Posterior cingulate gyrus (tissue), 11 donors: ENCODE measurements at regions of chr1 and their contacts with region 1.

Region 1: GRCh38 chr1:43073490-43074230 is 98.4 kb downstream of the EBNA1BP2 start:
- DNase-seq: peak; percentile 65 to 97 (median 82)

Region 2: GRCh38 chr1:42777852-42778251 is 295.8 kb before region 1 on chr1:
- intact Hi-C with region 1: loop called (anchors 1 kb)
- DNase-seq: peak in 3 of 10 donors; percentile 32 to 54 (median 47)

Region 3: DNA sequence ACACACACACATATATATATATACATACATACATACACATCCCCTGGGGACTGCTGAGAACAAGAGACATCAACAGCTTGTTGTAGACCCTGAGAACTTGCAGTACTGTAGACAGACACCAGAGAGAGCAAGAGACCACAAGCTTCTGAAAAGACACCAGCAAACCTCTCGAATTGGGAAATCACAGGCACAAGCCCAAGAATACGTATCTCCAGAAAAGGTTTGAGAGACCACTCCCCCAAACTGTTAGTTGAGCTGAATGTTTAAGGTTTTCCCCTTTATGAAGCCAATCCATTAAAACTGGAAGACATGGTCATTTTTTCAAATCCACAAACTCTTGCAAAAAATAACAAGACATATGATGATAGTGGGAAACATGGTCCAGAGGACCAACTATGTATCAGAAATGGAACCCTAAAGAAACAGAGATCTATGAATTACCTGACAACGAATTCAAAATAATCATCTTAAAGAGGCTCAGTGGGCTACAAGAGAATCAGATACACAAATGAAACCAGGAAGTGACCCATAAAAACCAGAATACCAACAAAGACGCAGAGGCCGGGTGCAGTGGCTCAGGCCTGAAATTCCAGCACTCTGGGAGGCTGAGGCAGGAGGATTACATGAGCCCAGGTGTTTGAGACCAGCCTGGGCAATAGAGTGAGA is 160.1 kb before region 1 on chr1:
- intact Hi-C with region 1: loop called (anchors 1 kb)
- DNase-seq: peak in 1 of 10 donors; percentile 37

Region 4: GRCh38 chr1:42924082-42924850 is 149.4 kb before region 1 on chr1:
- intact Hi-C with region 1: loop called (anchors 2 kb)
- DNase-seq: peak; percentile 95 to 100 (median 97)